ENCODE measurements at regions of chr17 and their contacts with region 1.

Region 1: DNA sequence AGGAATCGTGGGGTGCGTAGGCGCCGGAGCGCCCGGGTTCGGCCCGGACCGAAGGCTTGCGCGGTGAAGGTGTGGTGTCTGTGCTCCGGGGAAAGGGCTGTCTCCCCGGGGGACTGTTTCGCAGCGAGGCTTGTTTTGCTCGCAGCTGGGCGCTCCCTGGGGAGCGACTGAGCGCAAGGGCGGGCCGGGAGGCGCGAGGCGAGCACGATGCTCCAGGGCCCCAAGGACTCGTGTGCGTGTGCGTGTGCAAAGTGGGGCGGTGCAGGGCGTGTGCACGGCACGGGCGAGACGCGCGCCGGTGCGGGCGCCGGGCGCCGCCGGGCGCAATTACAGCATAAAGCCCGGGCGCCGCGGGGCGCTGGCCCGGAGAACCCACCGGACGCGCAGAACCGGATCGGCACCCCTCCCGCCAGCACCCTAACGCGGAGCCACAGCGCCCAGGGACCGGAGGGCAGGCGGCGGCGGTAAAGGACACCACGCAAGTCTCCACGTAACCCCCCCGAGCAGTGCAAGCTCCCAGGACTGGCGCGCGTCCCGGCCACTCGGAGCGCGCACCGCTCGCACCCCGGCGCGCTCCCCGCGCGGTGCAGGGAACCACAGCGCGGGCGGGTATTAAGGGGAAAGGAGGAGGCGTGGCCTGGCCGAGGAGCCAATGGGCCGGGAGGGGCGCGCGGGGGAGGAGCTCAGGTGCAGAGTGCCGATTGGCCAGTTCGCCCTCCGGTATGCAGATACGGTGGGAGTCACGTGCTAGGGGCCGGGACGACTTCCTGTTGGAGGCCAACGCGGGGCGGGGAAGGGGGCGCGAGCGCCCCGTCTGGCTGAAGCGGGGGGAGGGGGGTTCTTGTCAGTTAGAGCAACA is at the start of gene TNRC6C:
- DNase-seq: peak; percentile 100
- H3K4me3 ChIP-seq: peak within 1 kb of the TSS; percentile 50 to 79 (median 72)
- H3K27ac ChIP-seq: peak within 1 kb of the TSS; percentile 82 to 90 (median 86)
- H3K4me1 ChIP-seq: peaks cover 0 to 46% (median 31%) of the 10 kb centered on the region in 4 donors
- H3K27me3 ChIP-seq: no peaks in the 10 kb centered on the region
- CTCF ChIP-seq: no peak
- EP300 ChIP-seq: no peak
- POLR2A ChIP-seq: peak; percentile 100
- total RNA-seq, gene TNRC6C: 5.8 to 22.1 (median 18.2) TPM

Region 2: DNA sequence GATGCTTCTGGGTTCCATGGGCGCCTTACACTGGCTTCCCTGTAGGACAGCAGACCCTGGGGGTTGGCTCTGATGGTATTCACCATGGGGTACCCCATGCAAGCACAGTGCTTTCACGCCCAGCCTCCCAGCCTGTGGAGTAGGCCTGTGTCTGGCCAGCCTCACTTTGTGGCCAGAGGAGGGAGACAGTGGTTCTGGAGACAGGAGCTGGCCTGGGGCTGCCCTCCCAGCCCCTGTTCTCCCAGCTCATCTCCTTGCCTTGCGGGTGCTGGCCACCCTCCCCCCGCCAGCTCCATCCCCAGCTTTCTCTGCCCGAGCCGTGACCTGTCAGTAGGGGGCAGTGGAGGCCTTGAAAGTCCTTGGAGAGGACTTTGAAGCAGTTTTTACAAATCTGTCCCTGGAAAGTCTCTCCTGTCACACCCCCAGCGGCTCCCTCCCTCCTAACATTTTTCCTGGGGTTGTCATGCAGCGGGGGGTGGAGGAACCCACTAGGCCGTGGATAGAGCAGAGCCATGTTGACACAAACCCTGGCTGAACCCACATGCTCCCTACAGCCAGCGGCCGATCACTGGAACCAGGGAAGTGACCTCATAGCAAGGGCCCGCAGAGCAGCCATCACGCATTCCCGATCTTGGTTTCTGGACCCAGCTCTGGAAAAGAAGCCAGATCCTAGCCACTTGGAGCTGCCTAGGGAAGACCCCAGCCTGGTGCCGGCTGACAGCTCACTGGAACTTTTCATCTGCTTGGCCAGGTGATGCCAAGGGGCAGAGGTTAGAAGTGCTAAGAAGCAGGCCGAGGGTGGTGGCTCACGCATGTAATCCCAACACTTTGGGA is 528.0 kb before region 1 on chr17:
- intact Hi-C with region 1: loop called (anchors 5 kb)
- DNase-seq: peak; percentile 99
- H3K4me3 ChIP-seq: no peak overlapping the region
- H3K27ac ChIP-seq: peak overlapping the region; percentile 96 to 100 (median 98)
- H3K4me1 ChIP-seq: peaks cover 0 to 100% (median 99%) of the 10 kb centered on the region in 4 donors
- H3K27me3 ChIP-seq: no peaks in the 10 kb centered on the region
- CTCF ChIP-seq: peak in 3 of 4 experiments; percentile 78 to 95 (median 81)
- EP300 ChIP-seq: peak in 3 of 4 donors; percentile 87 to 96 (median 90)
- POLR2A ChIP-seq: no peak